Activated CD4-positive, alpha-beta memory T cell treated with anti-CD3 and anti-CD28 coated beads, Interleukin-2, amount 10 ng/mL, durations not matched to agents 7 days and 5 days (primary cell): ENCODE measurements at regions of chr1 and their contacts with region 1.

Region 1: GRCh38 chr1:101178688-101179491 is 57.9 kb upstream of the S1PR1 start:
- DNase-seq: no peak
- H3K4me3 Mint-ChIP-seq: peak overlapping the region; percentile 69
- H3K27ac Mint-ChIP-seq: peak overlapping the region; percentile 97
- H3K4me1 Mint-ChIP-seq: peaks cover 69% of the 10 kb centered on the region
- H3K27me3 Mint-ChIP-seq: no peaks in the 10 kb centered on the region

Region 2: DNA sequence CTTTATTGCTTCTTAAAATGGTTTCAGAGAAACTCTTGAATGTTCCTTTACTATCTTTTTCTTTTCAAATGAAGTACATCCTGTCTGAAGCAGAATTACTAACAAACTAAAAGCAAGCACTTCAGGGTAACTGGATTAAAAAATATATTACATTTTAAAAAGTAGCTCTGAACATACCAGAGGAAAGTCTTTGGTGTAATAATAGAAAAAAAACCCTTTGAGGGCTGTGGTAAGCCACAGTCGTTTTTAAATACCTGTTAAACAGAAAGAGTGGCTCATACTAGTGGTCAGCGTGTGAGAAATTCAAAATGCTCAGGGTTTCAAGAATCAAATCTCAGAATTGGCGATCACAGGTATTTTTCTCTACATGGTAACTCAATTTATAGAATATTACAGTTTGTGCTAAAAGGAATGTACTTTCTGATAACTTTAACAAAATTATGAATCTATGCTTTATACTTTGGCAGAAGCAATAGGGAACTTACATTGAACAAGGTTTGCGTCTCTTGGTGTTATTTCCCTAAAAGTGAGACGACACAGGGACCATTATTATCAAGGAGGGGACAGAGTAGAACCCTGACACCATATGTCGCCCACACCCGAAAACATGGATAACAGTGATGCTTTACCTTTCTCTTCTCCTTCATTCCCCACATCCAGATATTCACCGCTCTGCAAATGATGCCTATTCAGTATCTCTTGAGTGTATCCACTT is 56.3 kb before region 1 on chr1:
- CTCF ChIA-PET with region 1: no interaction called
- POLR2A ChIA-PET with region 1: interaction called, 15 read pairs
- DNase-seq: peak; percentile 34
- H3K4me3 Mint-ChIP-seq: peak overlapping the region; percentile 33
- H3K27ac Mint-ChIP-seq: peak overlapping the region; percentile 80
- H3K4me1 Mint-ChIP-seq: peaks cover 60% of the 10 kb centered on the region
- H3K27me3 Mint-ChIP-seq: peaks cover 4% of the 10 kb centered on the region

Region 3: DNA sequence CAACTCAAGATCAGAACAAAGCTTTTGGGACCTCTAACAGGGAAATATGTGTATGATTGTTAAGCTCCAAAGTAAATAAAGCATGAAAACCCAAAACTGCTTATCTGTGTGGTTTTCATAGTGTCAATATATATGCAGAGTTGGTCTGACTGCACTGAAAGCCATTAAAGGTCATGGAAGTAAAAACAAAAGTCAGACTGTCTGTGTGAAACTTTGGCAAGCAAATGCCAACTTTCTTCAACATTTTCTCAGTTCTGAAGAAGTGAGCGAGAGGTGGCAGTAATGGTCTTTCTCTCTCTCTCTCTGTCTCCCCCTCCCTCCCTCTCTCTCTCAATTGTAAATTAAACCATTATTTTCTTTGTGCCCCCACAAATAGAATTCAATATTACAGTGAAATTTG is 42.2 kb before region 1 on chr1:
- CTCF ChIA-PET with region 1: no interaction called
- POLR2A ChIA-PET with region 1: interaction called, 17 read pairs
- DNase-seq: peak; percentile 26
- H3K4me3 Mint-ChIP-seq: no peak overlapping the region
- H3K27ac Mint-ChIP-seq: peak overlapping the region; percentile 64
- H3K4me1 Mint-ChIP-seq: peaks cover 58% of the 10 kb centered on the region
- H3K27me3 Mint-ChIP-seq: no peaks in the 10 kb centered on the region

Region 4: GRCh38 chr1:101190441-101190840 is 11.6 kb after region 1 on chr1:
- CTCF ChIA-PET with region 1: interaction called, 3 read pairs
- POLR2A ChIA-PET with region 1: interaction called, 15 read pairs
- DNase-seq: no peak
- H3K4me3 Mint-ChIP-seq: no peak overlapping the region
- H3K27ac Mint-ChIP-seq: no peak overlapping the region
- H3K4me1 Mint-ChIP-seq: peaks cover 24% of the 10 kb centered on the region
- H3K27me3 Mint-ChIP-seq: no peaks in the 10 kb centered on the region

Region 5: GRCh38 chr1:101228424-101229134 is 49.7 kb after region 1 on chr1:
- CTCF ChIA-PET with region 1: no interaction called
- POLR2A ChIA-PET with region 1: interaction called, 11 read pairs
- DNase-seq: no peak
- H3K4me3 Mint-ChIP-seq: no peak overlapping the region
- H3K27ac Mint-ChIP-seq: no peak overlapping the region
- H3K4me1 Mint-ChIP-seq: peaks cover 33% of the 10 kb centered on the region
- H3K27me3 Mint-ChIP-seq: no peaks in the 10 kb centered on the region